ENCODE measurements at regions of chr6 and their contacts with region 1.

Region 1: GRCh38 chr6:131199568-131200272 is 64.5 kb downstream of the AKAP7 start:
- DNase-seq: peak; percentile 51 to 95 (median 71)
- ATAC-seq: peak; percentile 95
- H3K4me3 ChIP-seq: peak overlapping the region; percentile 31 to 35
- H3K4me3 Mint-ChIP-seq: peak overlapping the region; percentile 80
- H3K27ac ChIP-seq: peak overlapping the region; percentile 73 to 81
- H3K27ac Mint-ChIP-seq: peak overlapping the region; percentile 97
- H3K4me1 ChIP-seq: peaks cover 58% of the 10 kb centered on the region
- H3K4me1 Mint-ChIP-seq: peaks cover 61% of the 10 kb centered on the region
- H3K27me3 ChIP-seq: no peaks in the 10 kb centered on the region
- H3K27me3 Mint-ChIP-seq: no peaks in the 10 kb centered on the region
- CTCF ChIP-seq: peak; percentile 83

Region 2: GRCh38 chr6:131135244-131136020 is 64.3 kb before region 1 on chr6 and contains the start of gene AKAP7:
- CTCF ChIA-PET with region 1: interaction called, 3 read pairs
- POLR2A ChIA-PET with region 1: no interaction called
- intact Hi-C with region 1: loop called in 1 of 2 experiments (anchors 1 kb)
- DNase-seq: peak; percentile 14 to 80 (median 51)
- ATAC-seq: peak; percentile 79
- H3K4me3 ChIP-seq: peak within 1 kb of the TSS; percentile 58 to 66
- H3K4me3 Mint-ChIP-seq: peak within 1 kb of the TSS; percentile 92
- H3K27ac ChIP-seq: peak within 1 kb of the TSS; percentile 58 to 68
- H3K27ac Mint-ChIP-seq: peak within 1 kb of the TSS; percentile 95
- H3K4me1 ChIP-seq: peaks cover 12% of the 10 kb centered on the region
- H3K4me1 Mint-ChIP-seq: peaks cover 36% of the 10 kb centered on the region
- H3K27me3 ChIP-seq: no peaks in the 10 kb centered on the region
- H3K27me3 Mint-ChIP-seq: no peaks in the 10 kb centered on the region
- CTCF ChIP-seq: no peak
- total RNA-seq, gene AKAP7: 11.7 to 14.4 TPM

Region 3: DNA sequence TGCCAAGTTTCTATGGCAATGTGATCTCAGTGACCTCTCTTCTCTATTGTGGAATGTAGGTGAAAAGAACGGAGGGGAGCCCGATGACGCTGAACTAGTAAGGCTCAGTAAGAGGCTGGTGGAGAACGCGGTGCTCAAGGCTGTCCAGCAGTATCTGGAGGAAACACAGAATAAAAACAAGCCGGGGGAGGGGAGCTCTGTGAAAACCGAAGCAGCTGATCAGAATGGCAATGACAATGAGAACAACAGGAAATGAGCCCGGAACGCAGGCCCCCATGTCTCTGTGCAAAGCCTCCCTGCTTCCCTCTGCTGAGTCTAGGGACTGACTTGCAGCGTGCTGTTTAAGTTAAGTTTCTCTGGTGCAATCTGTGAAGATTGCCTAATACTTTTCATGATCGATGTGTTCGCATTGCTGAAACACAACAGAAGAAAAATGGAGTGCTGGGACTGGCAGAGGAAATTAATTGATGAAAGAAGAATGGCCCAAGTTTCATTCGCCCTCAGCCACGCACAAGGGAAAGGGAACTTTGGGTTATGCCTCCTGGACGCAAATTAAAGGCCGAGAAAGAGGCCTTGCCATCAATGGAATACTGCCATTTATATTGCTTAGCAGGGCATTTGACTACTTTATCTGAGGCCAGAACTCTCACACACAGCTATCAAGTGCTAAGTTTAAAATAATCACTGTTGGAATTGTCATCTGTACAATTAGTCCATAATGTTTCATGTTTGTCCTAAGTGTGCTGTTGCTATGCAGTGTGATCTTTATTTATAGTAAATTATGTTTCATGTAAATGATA is 82.0 kb after region 1 on chr6:
- CTCF ChIA-PET with region 1: interaction called, 14 read pairs
- POLR2A ChIA-PET with region 1: interaction called, 25 read pairs
- intact Hi-C with region 1: loop called (anchors 1 to 5 kb)
- DNase-seq: peak; percentile 46 to 88 (median 72)
- ATAC-seq: peak; percentile 97
- H3K4me3 ChIP-seq: peak overlapping the region; percentile 23 to 33
- H3K4me3 Mint-ChIP-seq: peak overlapping the region; percentile 77
- H3K27ac ChIP-seq: peak overlapping the region; percentile 74 to 78
- H3K27ac Mint-ChIP-seq: peak overlapping the region; percentile 97
- H3K4me1 ChIP-seq: peaks cover 48% of the 10 kb centered on the region
- H3K4me1 Mint-ChIP-seq: peaks cover 66% of the 10 kb centered on the region
- H3K27me3 ChIP-seq: no peaks in the 10 kb centered on the region
- H3K27me3 Mint-ChIP-seq: no peaks in the 10 kb centered on the region
- CTCF ChIP-seq: no peak

Region 4: DNA sequence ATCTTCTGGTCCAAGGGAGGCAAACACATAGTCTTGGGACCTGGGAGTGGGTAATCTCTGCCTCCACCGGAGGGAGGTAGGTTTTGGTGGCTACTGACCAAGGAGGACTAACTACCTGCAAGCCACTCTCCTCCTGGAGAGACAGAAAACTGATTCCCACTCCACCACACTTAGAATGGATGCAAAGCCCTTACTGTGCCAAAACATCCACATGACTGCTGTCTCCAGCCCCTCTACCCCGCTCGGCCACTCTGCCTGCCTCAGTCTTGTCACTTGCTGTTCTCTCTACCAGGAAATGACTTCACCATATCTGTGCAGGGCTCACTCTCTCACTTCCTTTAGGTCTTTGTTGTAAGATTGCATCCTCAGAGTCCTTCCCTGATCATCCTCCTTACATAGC is 243.8 kb after region 1 on chr6:
- CTCF ChIA-PET with region 1: interaction called, 6 read pairs
- POLR2A ChIA-PET with region 1: no interaction called
- intact Hi-C with region 1: loop called in 1 of 2 experiments (anchors 2 kb)
- DNase-seq: peak in 8 of 9 experiments; percentile 4 to 65 (median 30)
- ATAC-seq: peak; percentile 88
- H3K4me3 ChIP-seq: peak overlapping the region; percentile 48 to 57
- H3K4me3 Mint-ChIP-seq: peak overlapping the region; percentile 89
- H3K27ac ChIP-seq: peak overlapping the region; percentile 50 to 54
- H3K27ac Mint-ChIP-seq: peak overlapping the region; percentile 94
- H3K4me1 ChIP-seq: peaks cover 8% of the 10 kb centered on the region
- H3K4me1 Mint-ChIP-seq: peaks cover 58% of the 10 kb centered on the region
- H3K27me3 ChIP-seq: no peaks in the 10 kb centered on the region
- H3K27me3 Mint-ChIP-seq: no peaks in the 10 kb centered on the region
- CTCF ChIP-seq: no peak

Region 5: GRCh38 chr6:131597446-131597845 is 397.7 kb after region 1 on chr6:
- CTCF ChIA-PET with region 1: interaction called, 5 read pairs
- POLR2A ChIA-PET with region 1: interaction called, 3 read pairs
- intact Hi-C with region 1: loop called (anchors 2 to 5 kb)
- DNase-seq: peak in 2 of 9 experiments; percentile 20 to 33
- ATAC-seq: peak; percentile 59
- H3K4me3 ChIP-seq: no peak overlapping the region
- H3K4me3 Mint-ChIP-seq: no peak overlapping the region
- H3K27ac ChIP-seq: no peak overlapping the region
- H3K27ac Mint-ChIP-seq: peak overlapping the region; percentile 27
- H3K4me1 ChIP-seq: no peaks in the 10 kb centered on the region
- H3K4me1 Mint-ChIP-seq: peaks cover 4% of the 10 kb centered on the region
- H3K27me3 ChIP-seq: no peaks in the 10 kb centered on the region
- H3K27me3 Mint-ChIP-seq: no peaks in the 10 kb centered on the region
- CTCF ChIP-seq: peak; percentile 43